ENCODE measurements at regions of chr12 and their contacts with region 1.

Region 1: GRCh38 chr12:50043854-50044253 is 13.5 kb upstream of the ASIC1 start:
- DNase-seq: no peak
- H3K4me3 Mint-ChIP-seq: peak overlapping the region; percentile 16
- H3K27ac Mint-ChIP-seq: peak overlapping the region; percentile 46
- H3K4me1 Mint-ChIP-seq: peaks cover 35% of the 10 kb centered on the region
- H3K27me3 Mint-ChIP-seq: peaks cover 15% of the 10 kb centered on the region

Region 2: DNA sequence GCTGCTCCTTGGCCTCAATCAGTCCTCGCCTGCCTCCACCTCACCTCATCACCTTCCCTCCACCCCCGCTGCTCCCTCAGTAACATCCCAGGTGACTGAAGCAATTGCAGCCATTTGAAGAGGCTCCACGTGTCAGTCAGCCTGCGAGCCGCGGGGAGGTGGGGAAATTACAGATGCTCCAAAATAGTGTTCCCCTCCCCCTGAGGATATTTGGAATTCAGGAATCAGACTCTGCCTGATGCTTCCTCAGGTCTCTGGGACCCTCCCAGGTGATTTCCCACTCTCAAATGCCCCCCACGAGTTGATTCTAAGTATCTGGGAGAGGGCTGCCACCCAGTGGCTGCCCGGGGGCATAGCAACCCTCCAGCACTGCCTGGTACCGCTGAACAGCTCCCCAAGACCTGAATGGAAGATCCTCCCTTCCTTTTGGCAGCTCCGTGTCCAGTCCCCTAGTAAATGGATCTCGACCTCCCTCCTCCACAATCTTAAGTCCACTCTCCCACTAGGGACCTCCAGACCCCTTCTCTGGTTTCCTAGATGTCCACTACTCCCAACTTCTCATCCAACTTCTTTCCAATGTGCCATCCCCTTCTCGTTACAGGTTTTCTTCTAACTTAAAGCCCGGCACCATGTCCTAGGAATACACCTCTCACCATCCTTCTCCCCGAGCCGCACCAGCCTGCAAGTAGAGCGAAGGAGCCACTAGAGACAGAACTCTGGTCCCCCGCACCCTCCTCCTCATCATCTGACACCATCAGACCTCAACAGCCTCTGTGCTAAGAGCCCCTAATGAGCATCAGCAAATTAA is 12.2 kb after region 1 on chr12:
- intact Hi-C with region 1: loop called (anchors 1 kb)
- DNase-seq: peak; percentile 89
- H3K4me3 Mint-ChIP-seq: peak overlapping the region; percentile 90
- H3K27ac Mint-ChIP-seq: peak overlapping the region; percentile 66
- H3K4me1 Mint-ChIP-seq: peaks cover 37% of the 10 kb centered on the region
- H3K27me3 Mint-ChIP-seq: peaks cover 40% of the 10 kb centered on the region

Region 3: GRCh38 chr12:50074936-50075807 is 31.3 kb after region 1 on chr12:
- intact Hi-C with region 1: loop called (anchors 1 kb)
- DNase-seq: peak; percentile 94
- H3K4me3 Mint-ChIP-seq: no peak overlapping the region
- H3K27ac Mint-ChIP-seq: peak overlapping the region; percentile 41
- H3K4me1 Mint-ChIP-seq: peaks cover 13% of the 10 kb centered on the region
- H3K27me3 Mint-ChIP-seq: no peaks in the 10 kb centered on the region

Region 4: DNA sequence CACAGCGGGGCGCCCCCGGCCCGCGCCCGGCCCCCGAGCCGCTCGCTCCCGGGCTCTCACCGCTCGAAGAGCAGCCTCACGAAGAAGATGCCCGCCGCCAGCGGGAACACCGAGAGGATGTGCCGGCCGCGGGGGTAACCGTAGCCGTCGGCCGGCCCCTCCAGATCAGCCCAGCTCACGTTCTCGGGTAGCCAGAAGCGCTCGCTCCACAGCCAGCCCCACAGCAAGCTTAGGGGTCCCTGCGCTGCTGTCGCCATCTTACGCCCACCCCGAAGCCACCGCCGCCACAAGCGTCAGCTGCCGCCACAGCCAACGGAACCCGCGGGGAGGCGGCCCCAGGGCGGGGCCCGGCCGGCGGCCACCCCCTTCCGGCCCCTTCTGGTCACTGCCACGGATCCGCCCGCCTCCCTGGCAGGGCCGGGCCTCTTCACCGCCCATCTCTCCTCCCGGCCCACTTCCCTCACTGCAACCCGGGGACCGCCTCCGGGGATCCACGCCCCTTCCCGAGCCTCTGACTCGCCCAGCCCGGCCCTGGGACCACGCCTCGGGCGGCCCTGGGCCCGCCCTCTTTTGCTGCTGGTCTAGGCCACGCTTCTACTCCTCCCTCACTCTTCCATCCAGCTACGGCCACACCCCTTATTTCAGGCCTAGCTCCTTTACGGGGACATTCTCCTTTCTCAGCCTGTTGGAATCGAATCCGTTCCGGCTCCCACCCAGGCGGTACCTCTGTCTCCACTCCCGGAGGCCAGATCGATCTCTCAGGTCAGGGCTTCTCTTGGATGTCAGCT is 123.4 kb after region 1 on chr12 and contains the start of gene CERS5:
- intact Hi-C with region 1: no loop called
- DNase-seq: peak; percentile 100
- H3K4me3 Mint-ChIP-seq: peak within 1 kb of the TSS; percentile 86
- H3K27ac Mint-ChIP-seq: peak within 1 kb of the TSS; percentile 95
- H3K4me1 Mint-ChIP-seq: peaks cover 33% of the 10 kb centered on the region
- H3K27me3 Mint-ChIP-seq: no peaks in the 10 kb centered on the region
- total RNA-seq, gene CERS5: 62.6 and 66.5 TPM in 2 replicates

Measured in activated CD4-positive, alpha-beta T cell treated with anti-CD3 and anti-CD28 coated beads, Interleukin-2, amount 10 ng/mL, durations not matched to agents 24 days and 14 days (primary cell).